ENCODE measurements at regions of chr17 and their contacts with region 1.

Region 1: DNA sequence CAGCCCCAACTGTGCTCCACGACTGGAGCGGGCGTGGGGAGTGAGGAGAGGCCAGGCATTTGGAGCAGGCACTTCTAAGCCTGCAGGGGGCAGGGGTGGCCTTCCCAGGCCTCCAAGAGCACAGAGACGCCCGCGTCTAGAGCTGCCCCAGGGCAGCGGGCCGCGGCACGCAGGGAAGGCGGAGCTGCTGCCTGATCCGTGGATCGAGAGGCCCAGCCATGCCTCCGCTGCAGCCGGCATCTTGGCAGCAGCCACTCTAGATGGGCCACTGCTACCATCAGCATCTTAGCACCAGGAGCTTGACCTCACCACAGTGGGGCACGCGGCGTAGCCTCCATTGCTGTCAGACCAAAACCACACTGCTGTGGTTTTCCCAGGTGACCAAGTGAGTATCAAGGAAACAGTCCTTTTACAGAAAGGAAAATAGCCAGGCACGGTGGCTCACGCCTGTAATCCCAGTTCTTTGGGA is 20.4 kb upstream of the WDR45B start:
- DNase-seq: peak; percentile 44
- ATAC-seq: peak; percentile 95
- H3K4me3 ChIP-seq: no peak overlapping the region
- H3K27ac ChIP-seq: no peak overlapping the region
- H3K4me1 ChIP-seq: no peaks in the 10 kb centered on the region
- H3K27me3 ChIP-seq: no peaks in the 10 kb centered on the region
- CTCF ChIP-seq: peak; percentile 52
- POLR2A ChIP-seq: no peak
- RAD21 ChIP-seq: peak; percentile 68

Region 2: DNA sequence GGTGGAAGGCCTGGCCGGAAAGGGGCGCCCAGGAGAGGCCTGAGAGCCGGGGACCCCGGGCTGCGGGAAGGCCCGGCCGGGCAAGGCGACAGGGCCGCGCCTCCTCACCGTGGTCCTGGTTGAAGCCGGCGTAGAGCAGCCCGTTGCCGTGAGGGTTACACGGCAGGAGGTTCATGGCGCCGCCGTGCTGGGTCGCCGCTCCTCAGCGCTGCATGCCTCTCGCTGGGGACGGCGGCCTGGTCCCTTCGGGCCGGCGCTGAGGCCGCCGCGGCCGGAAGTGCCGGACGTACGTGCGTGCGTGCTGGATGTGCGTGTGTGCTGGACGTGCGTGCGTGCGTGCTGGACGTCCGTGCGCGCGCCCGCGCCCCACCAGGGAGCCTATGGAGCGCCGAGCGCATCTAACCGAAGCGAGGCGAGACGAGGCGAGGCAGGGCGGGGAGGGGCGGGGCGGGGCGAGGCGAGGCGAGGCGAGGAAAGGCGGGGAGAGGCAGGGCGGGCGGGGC is 20.4 kb before region 1 on chr17 and contains the start of gene WDR45B:
- CTCF ChIA-PET with region 1: no interaction called
- POLR2A ChIA-PET with region 1: interaction called, 13 read pairs
- dilution Hi-C with region 1: no loop called
- in situ Hi-C with region 1: no loop called
- intact Hi-C with region 1: no loop called
- DNase-seq: peak; percentile 98
- ATAC-seq: peak; percentile 92
- H3K4me3 ChIP-seq: peak within 1 kb of the TSS; percentile 96
- H3K27ac ChIP-seq: peak within 1 kb of the TSS; percentile 99
- H3K4me1 ChIP-seq: peaks cover 5% of the 10 kb centered on the region; the same call in 1 of the 2 replicates
- H3K27me3 ChIP-seq: no peaks in the 10 kb centered on the region
- CTCF ChIP-seq: no peak
- POLR2A ChIP-seq: peak; percentile 96
- RAD21 ChIP-seq: 0 out of 2 replicates have a peak, but pooled peaks have one; percentile 6
- total RNA-seq, gene WDR45B: 65.8 and 98.2 TPM in 2 replicates

Region 3: GRCh38 chr17:82767041-82767754 is 98.5 kb after region 1 on chr17:
- CTCF ChIA-PET with region 1: no interaction called
- POLR2A ChIA-PET with region 1: no interaction called
- dilution Hi-C with region 1: no loop called
- in situ Hi-C with region 1: no loop called
- intact Hi-C with region 1: loop called (anchors 2 kb)
- DNase-seq: peak; percentile 38
- ATAC-seq: peak; percentile 56; the same call in 1 of the 2 replicates
- H3K4me3 ChIP-seq: no peak overlapping the region
- H3K27ac ChIP-seq: no peak overlapping the region
- H3K4me1 ChIP-seq: peaks cover 1% of the 10 kb centered on the region
- H3K27me3 ChIP-seq: no peaks in the 10 kb centered on the region
- CTCF ChIP-seq: peak; percentile 62
- POLR2A ChIP-seq: no peak
- RAD21 ChIP-seq: peak; percentile 75

Measured in IMR-90 (cell line).